ENCODE measurements at regions of chr6 and their contacts with region 1.

Region 1: GRCh38 chr6:39865011-39865888 is 69.0 kb downstream of the MOCS1 start:
- DNase-seq: peak; percentile 70
- H3K4me3 Mint-ChIP-seq: no peak overlapping the region
- H3K27ac Mint-ChIP-seq: no peak overlapping the region
- H3K4me1 Mint-ChIP-seq: no peaks in the 10 kb centered on the region
- H3K27me3 Mint-ChIP-seq: peaks cover 3% of the 10 kb centered on the region

Region 2: DNA sequence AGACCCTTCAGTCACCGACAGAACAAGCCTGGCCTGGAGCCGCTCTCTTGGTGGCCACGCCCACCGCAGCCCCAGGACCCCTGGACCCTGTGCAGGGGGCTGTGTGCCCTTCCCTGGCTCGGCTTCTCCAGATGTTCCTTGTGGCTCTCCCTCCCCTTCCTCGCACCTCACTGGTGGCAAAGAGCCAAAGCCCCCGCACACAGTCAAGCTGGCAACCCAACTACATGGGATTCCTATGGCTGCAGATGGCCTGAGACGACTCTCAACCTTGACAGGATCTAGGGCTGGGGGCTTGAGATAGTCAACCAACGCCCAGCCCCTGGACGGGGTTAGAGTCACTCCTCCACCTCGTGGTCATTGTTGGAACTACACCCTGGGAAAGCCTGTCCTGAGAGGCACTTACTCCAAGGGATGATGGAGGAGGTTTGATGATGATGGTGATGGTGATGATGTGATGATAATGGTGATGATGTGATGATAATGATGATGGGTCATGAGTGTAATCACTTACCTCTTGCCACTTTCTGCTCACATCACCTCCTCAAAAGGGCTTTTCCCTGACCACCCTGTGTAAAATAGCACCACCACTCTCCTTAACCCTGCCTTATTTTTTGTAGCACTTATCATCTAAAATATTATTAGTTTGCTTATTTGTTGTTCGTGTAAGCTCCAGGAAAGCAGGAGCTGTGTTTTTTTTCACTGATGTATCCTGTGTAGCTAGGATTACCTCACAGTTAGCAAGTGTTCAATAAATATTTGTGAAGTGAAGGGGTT is 443.5 kb after region 1 on chr6:
- CTCF ChIA-PET with region 1: interaction called, 16 read pairs
- DNase-seq: peak; percentile 75
- H3K4me3 Mint-ChIP-seq: no peak overlapping the region
- H3K27ac Mint-ChIP-seq: peak overlapping the region; percentile 61
- H3K4me1 Mint-ChIP-seq: no peaks in the 10 kb centered on the region
- H3K27me3 Mint-ChIP-seq: peaks cover 57% of the 10 kb centered on the region